Activated CD4-positive, alpha-beta T cell treated with anti-CD3 and anti-CD28 coated beads for 36 hours (primary cell): ENCODE measurements at regions of chr9 and their contacts with region 1.

Region 1: GRCh38 chr9:112327718-112328464 is 5.5 kb downstream of the PTBP3 start:
- DNase-seq: no peak
- ATAC-seq: peak; percentile 74
- H3K4me3 Mint-ChIP-seq: no peak overlapping the region
- H3K27ac Mint-ChIP-seq: peak overlapping the region; percentile 31
- H3K4me1 Mint-ChIP-seq: peaks cover 65% of the 10 kb centered on the region
- H3K27me3 Mint-ChIP-seq: no peaks in the 10 kb centered on the region

Region 2: DNA sequence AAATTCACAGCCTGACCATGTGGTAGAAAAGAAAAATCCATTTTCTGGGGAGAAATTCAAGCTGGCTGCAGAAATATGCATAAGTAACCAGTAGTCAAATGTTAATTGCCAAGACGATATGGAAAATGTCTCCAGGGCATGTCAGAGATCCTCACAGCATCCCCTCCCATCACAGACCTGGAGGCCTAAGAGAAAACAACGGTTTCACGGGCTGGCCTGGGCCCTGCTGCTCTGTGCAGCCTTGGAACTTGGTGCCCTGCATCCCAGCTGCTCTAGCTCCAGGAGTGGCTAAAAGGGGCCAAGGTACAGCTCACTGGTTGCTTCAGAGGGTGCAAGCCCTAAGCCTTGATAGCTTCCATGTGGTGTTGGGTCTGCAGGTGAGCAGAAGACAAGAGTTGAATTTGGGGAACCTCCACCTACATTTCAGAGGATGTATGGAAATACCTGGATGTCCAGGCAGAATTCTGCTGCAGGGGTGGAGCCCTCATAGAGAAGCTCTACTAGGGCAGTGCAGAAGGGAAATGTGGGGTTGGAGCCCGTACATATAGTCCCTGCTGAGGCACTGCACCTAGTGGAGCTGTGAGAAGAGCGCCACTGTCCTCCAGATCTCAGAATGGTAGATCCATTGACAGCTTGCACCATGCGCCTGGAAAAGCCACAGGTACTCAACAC is 44.2 kb before region 1 on chr9:
- CTCF ChIA-PET with region 1: interaction called, 4 read pairs
- POLR2A ChIA-PET with region 1: no interaction called
- intact Hi-C with region 1: loop called in 1 of 2 experiments (anchors 5 kb)
- DNase-seq: no peak
- ATAC-seq: no peak
- H3K4me3 Mint-ChIP-seq: no peak overlapping the region
- H3K27ac Mint-ChIP-seq: no peak overlapping the region
- H3K4me1 Mint-ChIP-seq: peaks cover 29% of the 10 kb centered on the region
- H3K27me3 Mint-ChIP-seq: no peaks in the 10 kb centered on the region

Region 3: GRCh38 chr9:112355427-112355897 is 27.6 kb after region 1 on chr9:
- CTCF ChIA-PET with region 1: interaction called, 8 read pairs
- POLR2A ChIA-PET with region 1: interaction called, 10 read pairs
- intact Hi-C with region 1: loop called in 1 of 2 experiments (anchors 1 kb)
- DNase-seq: peak; percentile 21
- ATAC-seq: peak; percentile 71
- H3K4me3 Mint-ChIP-seq: no peak overlapping the region
- H3K27ac Mint-ChIP-seq: peak overlapping the region; percentile 87
- H3K4me1 Mint-ChIP-seq: peaks cover 31% of the 10 kb centered on the region
- H3K27me3 Mint-ChIP-seq: peaks cover 2% of the 10 kb centered on the region

Region 4: DNA sequence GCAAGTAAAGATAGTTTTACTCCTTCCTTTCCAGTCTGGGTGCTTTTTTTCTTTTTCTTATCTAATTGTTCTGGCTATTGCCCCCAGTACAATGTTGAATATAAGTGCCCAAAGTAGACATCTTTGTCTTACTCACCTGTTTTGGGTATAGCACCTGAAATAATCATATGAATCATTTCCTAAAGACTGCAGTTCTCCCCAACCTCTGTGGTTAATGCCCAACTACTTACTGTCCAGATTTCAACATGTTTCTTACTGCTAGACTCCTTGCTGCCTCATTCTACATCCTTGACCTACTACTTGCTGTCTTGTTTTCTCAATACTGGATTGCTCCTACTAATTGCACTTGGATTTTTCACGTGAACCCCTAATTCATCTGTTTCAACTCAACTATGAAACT is 43.2 kb after region 1 on chr9:
- CTCF ChIA-PET with region 1: no interaction called
- POLR2A ChIA-PET with region 1: no interaction called
- intact Hi-C with region 1: no loop called
- DNase-seq: no peak
- ATAC-seq: no peak
- H3K4me3 Mint-ChIP-seq: no peak overlapping the region
- H3K27ac Mint-ChIP-seq: no peak overlapping the region
- H3K4me1 Mint-ChIP-seq: no peaks in the 10 kb centered on the region
- H3K27me3 Mint-ChIP-seq: no peaks in the 10 kb centered on the region